ENCODE measurements at regions of chr9 and their contacts with region 1.

Region 1: GRCh38 chr9:127763918-127764384 is 14.5 kb downstream of the SH2D3C start:
- DNase-seq: peak; percentile 58
- ATAC-seq: peak; percentile 64
- H3K4me3 Mint-ChIP-seq: no peak overlapping the region
- H3K27ac Mint-ChIP-seq: peak overlapping the region; percentile 35
- H3K4me1 Mint-ChIP-seq: peaks cover 49% of the 10 kb centered on the region
- H3K27me3 Mint-ChIP-seq: no peaks in the 10 kb centered on the region
- CTCF ChIP-seq: peak; percentile 38

Region 2: GRCh38 chr9:127664667-127665507 is 99.1 kb before region 1 on chr9:
- CTCF ChIA-PET with region 1: no interaction called
- POLR2A ChIA-PET with region 1: no interaction called
- intact Hi-C with region 1: no loop called
- DNase-seq: no peak
- ATAC-seq: no peak
- H3K4me3 Mint-ChIP-seq: no peak overlapping the region
- H3K27ac Mint-ChIP-seq: no peak overlapping the region
- H3K4me1 Mint-ChIP-seq: no peaks in the 10 kb centered on the region
- H3K27me3 Mint-ChIP-seq: no peaks in the 10 kb centered on the region
- CTCF ChIP-seq: no peak

Region 3: GRCh38 chr9:127779136-127779981 is 15.4 kb after region 1 on chr9:
- CTCF ChIA-PET with region 1: interaction called, 144 read pairs
- POLR2A ChIA-PET with region 1: interaction called, 56 read pairs
- intact Hi-C with region 1: no loop called
- DNase-seq: peak; percentile 87
- ATAC-seq: peak; percentile 57
- H3K4me3 Mint-ChIP-seq: peak overlapping the region; percentile 99
- H3K27ac Mint-ChIP-seq: peak overlapping the region; percentile 99
- H3K4me1 Mint-ChIP-seq: peaks cover 47% of the 10 kb centered on the region
- H3K27me3 Mint-ChIP-seq: no peaks in the 10 kb centered on the region
- CTCF ChIP-seq: no peak

Region 4: GRCh38 chr9:127796225-127796813 is 32.4 kb after region 1 on chr9:
- CTCF ChIA-PET with region 1: no interaction called
- POLR2A ChIA-PET with region 1: no interaction called
- intact Hi-C with region 1: no loop called
- DNase-seq: no peak
- ATAC-seq: peak; percentile 45
- H3K4me3 Mint-ChIP-seq: no peak overlapping the region
- H3K27ac Mint-ChIP-seq: peak overlapping the region; percentile 81
- H3K4me1 Mint-ChIP-seq: peaks cover 24% of the 10 kb centered on the region
- H3K27me3 Mint-ChIP-seq: no peaks in the 10 kb centered on the region
- CTCF ChIP-seq: no peak

Region 5: DNA sequence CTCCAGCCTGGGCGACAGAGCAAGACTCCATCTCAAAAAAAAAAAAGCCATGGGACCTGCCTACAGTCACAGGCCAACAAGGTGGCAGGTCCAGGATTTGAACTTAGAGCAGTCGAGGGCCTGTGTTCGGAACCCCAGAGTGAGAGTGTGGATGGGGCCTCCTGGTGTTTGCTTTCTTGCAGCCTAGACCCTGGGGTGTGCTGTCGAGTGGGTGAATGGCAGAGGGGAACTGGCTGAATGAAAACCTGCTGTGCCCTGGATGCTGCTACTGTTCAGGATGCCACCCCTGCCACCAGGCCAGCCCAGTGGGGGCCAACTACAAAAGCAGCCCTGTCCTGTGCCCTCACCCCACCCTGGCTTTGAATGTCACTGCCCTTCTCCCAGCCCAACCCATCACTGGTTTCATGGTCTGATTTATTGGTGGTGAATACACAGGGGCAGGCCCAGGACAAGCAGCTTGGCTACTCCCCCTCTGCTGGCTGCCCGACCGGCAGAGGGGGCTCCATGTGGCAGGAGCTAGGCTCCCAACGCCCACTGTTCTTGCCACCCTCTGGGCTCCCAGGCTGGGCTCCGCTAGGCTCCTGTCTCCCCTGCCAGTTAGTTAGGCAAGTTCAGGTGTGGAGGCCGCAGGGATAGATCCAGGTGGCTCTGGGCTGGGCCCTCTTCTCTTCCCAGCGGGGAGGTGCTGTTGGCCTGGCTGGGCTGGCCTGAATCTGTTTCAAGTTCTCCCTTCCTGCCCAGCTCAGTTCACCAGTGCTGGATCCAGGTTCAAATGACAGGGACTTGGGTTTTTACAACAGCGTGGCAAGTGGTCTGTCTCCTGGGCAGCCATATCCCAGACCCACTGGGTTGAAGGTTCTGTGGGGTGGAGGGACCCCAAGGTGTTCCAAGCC is 50.9 kb after region 1 on chr9:
- CTCF ChIA-PET with region 1: no interaction called
- POLR2A ChIA-PET with region 1: no interaction called
- intact Hi-C with region 1: no loop called
- DNase-seq: no peak
- ATAC-seq: no peak
- H3K4me3 Mint-ChIP-seq: no peak overlapping the region
- H3K27ac Mint-ChIP-seq: no peak overlapping the region
- H3K4me1 Mint-ChIP-seq: no peaks in the 10 kb centered on the region
- H3K27me3 Mint-ChIP-seq: no peaks in the 10 kb centered on the region
- CTCF ChIP-seq: no peak

Region 6: DNA sequence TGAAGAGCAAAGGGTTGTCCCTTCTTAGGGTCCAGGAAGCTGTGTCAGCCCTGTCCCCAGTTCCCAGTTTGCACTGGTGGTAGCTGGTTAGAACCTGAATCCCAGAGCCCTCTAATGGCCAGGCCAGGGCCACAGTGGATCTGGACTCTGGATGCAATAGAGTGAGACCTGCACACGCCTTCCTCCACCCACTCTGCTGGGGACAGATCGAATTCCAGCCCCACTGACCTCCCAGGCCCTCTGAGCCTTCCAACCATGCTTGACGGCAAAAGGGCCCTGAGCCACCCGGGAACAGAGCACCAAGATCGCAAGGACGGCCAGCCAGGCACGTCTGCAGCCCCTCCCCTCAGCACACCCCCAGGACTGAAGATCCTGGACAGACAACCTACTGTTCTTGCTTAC is 279.5 kb after region 1 on chr9:
- CTCF ChIA-PET with region 1: no interaction called
- POLR2A ChIA-PET with region 1: no interaction called
- intact Hi-C with region 1: no loop called
- DNase-seq: no peak
- ATAC-seq: no peak
- H3K4me3 Mint-ChIP-seq: no peak overlapping the region
- H3K27ac Mint-ChIP-seq: no peak overlapping the region
- H3K4me1 Mint-ChIP-seq: peaks cover 7% of the 10 kb centered on the region
- H3K27me3 Mint-ChIP-seq: no peaks in the 10 kb centered on the region
- CTCF ChIP-seq: no peak